Activated CD4-positive, alpha-beta T cell treated with anti-CD3 and anti-CD28 coated beads for 36 hours (primary cell): ENCODE measurements at regions of chr11 and their contacts with region 1.

Region 1: GRCh38 chr11:95050595-95051202 is 1.5 kb downstream of the KDM4F start:
- DNase-seq: no peak
- ATAC-seq: no peak
- H3K4me3 Mint-ChIP-seq: no peak overlapping the region
- H3K27ac Mint-ChIP-seq: no peak overlapping the region
- H3K4me1 Mint-ChIP-seq: no peaks in the 10 kb centered on the region
- H3K27me3 Mint-ChIP-seq: peaks cover 8% of the 10 kb centered on the region

Region 2: DNA sequence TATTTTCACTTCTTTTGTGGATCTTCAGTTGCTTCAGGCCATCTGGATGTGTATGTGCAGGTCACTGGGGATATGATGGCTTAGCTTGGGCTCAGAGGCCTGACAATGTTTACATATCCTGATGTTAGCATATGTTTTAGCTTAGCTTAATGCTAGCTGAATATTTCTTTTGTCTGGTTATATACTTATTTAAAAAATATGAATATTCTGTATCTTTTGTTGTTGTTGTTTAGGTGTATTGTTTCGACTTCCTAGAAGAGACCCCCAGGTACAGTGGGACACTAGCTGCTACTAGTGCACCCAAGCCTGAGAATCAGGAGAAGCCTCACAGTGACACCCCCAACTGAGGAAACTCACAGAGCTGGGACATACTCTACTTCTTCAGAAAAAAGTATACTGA is 25.7 kb before region 1 on chr11 and contains the start of gene KDM4E:
- CTCF ChIA-PET with region 1: no interaction called
- POLR2A ChIA-PET with region 1: no interaction called
- intact Hi-C with region 1: loop called (anchors 1 kb)
- DNase-seq: no peak
- ATAC-seq: no peak
- H3K4me3 Mint-ChIP-seq: no peak within 1 kb of the TSS
- H3K27ac Mint-ChIP-seq: no peak within 1 kb of the TSS
- H3K4me1 Mint-ChIP-seq: no peaks in the 10 kb centered on the region
- H3K27me3 Mint-ChIP-seq: no peaks in the 10 kb centered on the region
- total RNA-seq, gene KDM4E: not detected